ENCODE measurements at regions of chr2 and their contacts with region 1.

Region 1: GRCh38 chr2:64523666-64524603 is at the start of gene AFTPH:
- DNase-seq: peak; percentile 100
- ATAC-seq: peak; percentile 93
- H3K4me3 Mint-ChIP-seq: peak within 1 kb of the TSS; percentile 95
- H3K27ac Mint-ChIP-seq: peak within 1 kb of the TSS; percentile 100
- H3K4me1 Mint-ChIP-seq: peaks cover 30% of the 10 kb centered on the region
- H3K27me3 Mint-ChIP-seq: no peaks in the 10 kb centered on the region
- total RNA-seq, gene AFTPH: 32.3 to 35.2 TPM

Region 2: DNA sequence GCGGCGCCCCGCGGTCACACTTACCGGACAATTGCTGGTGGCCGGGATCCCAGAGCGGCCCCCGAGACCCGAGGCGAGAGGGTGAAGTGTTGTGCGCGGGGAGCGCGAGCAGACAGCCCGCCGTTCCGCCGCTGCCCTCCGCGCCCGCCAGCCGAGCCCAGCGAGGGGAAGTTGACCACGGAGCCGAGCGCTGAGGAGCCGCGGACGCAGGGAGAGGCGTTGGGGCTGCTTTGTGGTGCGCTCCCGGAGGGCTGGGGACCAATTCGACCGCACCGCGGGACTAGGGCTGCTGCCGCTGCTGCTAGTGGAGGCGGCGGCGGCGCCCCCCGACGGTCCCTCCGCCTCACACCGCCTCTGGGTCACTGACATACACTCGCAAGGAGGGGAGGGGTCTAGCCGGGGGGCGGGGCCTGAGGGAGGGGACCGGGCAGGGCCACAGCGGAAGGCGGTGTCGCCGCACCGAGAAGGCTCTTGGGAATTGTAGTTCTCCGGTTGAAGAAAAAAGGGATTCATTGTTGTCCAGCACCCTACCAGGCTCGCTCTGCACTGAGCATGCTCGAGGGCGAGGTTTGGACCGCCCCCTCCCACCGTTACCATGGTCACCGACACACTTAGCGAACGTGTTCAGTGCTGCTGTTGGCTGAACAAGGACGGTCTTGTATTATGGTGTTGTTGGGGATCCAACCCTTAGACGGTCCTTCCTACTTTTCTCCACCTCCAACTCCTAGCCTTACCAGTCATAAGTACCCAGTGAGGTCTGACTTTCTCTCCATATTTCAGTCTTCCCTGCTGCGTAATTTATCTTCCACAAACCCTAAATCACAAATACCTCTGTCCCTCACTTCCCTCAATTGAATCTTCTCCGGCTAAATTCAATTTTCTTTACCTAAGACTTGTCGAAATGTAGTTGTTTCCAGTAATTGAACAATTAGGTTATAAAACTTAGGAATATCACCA is 379.6 kb before region 1 on chr2 and contains the start of gene PELI1:
- CTCF ChIA-PET with region 1: interaction called, 3 read pairs
- POLR2A ChIA-PET with region 1: no interaction called
- intact Hi-C with region 1: loop called in 1 of 2 experiments (anchors 1 kb)
- DNase-seq: peak; percentile 97
- ATAC-seq: peak; percentile 89
- H3K4me3 Mint-ChIP-seq: peak within 1 kb of the TSS; percentile 84
- H3K27ac Mint-ChIP-seq: peak within 1 kb of the TSS; percentile 97
- H3K4me1 Mint-ChIP-seq: peaks cover 30% of the 10 kb centered on the region
- H3K27me3 Mint-ChIP-seq: no peaks in the 10 kb centered on the region
- total RNA-seq, gene PELI1: 21.3 to 29.7 TPM

Region 3: GRCh38 chr2:64348386-64349130 is 175.4 kb before region 1 on chr2:
- CTCF ChIA-PET with region 1: no interaction called
- POLR2A ChIA-PET with region 1: no interaction called
- intact Hi-C with region 1: no loop called
- DNase-seq: no peak
- ATAC-seq: no peak
- H3K4me3 Mint-ChIP-seq: no peak overlapping the region
- H3K27ac Mint-ChIP-seq: no peak overlapping the region
- H3K4me1 Mint-ChIP-seq: no peaks in the 10 kb centered on the region
- H3K27me3 Mint-ChIP-seq: peaks cover 2% of the 10 kb centered on the region

Region 4: DNA sequence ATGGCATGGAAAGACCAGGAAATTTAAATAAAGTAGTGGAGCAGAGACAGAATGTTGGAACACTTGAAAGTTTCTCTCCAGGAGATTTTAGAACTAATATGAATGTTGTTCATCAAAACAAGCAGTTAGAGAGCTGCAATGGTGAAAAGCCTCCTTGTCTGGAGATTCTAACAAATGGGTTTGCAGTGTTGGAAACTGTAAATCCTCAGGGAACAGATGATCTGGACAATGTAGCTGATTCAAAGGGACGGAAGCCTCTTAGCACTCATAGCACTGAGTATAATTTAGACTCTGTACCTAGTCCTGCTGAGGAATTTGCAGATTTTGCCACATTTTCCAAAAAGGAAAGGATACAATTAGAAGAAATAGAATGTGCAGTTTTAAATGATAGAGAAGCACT is 27.9 kb after region 1 on chr2:
- CTCF ChIA-PET with region 1: interaction called, 74 read pairs
- POLR2A ChIA-PET with region 1: no interaction called
- intact Hi-C with region 1: loop called in 1 of 2 experiments (anchors 1 kb)
- DNase-seq: no peak
- ATAC-seq: no peak
- H3K4me3 Mint-ChIP-seq: no peak overlapping the region
- H3K27ac Mint-ChIP-seq: no peak overlapping the region
- H3K4me1 Mint-ChIP-seq: peaks cover 26% of the 10 kb centered on the region
- H3K27me3 Mint-ChIP-seq: no peaks in the 10 kb centered on the region

Region 5: GRCh38 chr2:64653349-64654062 is 129.6 kb after region 1 on chr2 and contains the start of gene SERTAD2:
- CTCF ChIA-PET with region 1: interaction called, 9 read pairs
- POLR2A ChIA-PET with region 1: interaction called, 8 read pairs
- intact Hi-C with region 1: loop called (anchors 1 to 2 kb)
- DNase-seq: peak; percentile 90
- ATAC-seq: peak; percentile 80
- H3K4me3 Mint-ChIP-seq: peak within 1 kb of the TSS; percentile 85
- H3K27ac Mint-ChIP-seq: peak within 1 kb of the TSS; percentile 94
- H3K4me1 Mint-ChIP-seq: peaks cover 76% of the 10 kb centered on the region
- H3K27me3 Mint-ChIP-seq: no peaks in the 10 kb centered on the region
- total RNA-seq, gene SERTAD2: 14.5 to 14.9 TPM

Region 6: GRCh38 chr2:64831134-64831976 is 307.4 kb after region 1 on chr2:
- CTCF ChIA-PET with region 1: interaction called, 4 read pairs
- POLR2A ChIA-PET with region 1: interaction called, 4 read pairs
- intact Hi-C with region 1: loop called in 1 of 2 experiments (anchors 1 kb)
- DNase-seq: peak; percentile 92
- ATAC-seq: peak; percentile 96
- H3K4me3 Mint-ChIP-seq: peak overlapping the region; percentile 34
- H3K27ac Mint-ChIP-seq: peak overlapping the region; percentile 86
- H3K4me1 Mint-ChIP-seq: peaks cover 16% of the 10 kb centered on the region
- H3K27me3 Mint-ChIP-seq: no peaks in the 10 kb centered on the region

Region 7: DNA sequence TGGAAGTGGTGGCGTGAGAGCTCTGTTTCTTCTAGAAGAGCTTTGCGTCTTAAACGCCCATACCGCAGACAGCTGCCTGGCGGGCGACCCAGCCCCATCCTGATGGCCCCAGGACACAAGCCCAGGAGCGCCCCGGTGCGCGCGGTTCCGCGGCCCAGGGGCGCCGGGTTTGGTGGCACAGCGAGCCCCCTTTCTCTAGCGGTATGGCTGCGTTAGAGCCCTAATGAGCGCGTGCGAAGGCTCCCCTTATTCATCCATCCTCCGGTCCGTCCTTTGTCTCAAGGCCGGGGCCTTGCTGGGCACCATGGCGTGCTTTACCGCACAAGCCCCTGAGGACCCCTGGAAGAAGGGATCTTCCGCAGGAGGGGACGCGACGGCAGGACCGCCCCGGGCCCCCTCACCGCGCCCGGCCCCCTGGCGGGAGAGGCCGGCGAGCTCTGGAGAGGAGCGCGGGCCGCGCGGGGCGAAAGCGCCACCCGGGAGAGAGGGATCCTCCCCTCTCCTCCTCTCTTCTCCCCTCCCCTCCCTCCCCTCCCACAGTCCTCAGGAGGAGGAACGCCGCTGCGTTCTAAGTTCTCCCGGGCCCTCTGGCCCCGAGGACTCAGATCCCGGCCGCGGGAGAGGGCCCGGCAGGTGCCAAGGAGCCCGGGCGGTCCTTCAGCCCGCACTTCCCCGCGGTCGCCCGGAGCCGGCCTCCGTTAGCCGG is 464.6 kb after region 1 on chr2:
- CTCF ChIA-PET with region 1: no interaction called
- POLR2A ChIA-PET with region 1: no interaction called
- intact Hi-C with region 1: loop called in 1 of 2 experiments (anchors 1 kb)
- DNase-seq: peak; percentile 74
- ATAC-seq: peak; percentile 37
- H3K4me3 Mint-ChIP-seq: peak overlapping the region; percentile 68
- H3K27ac Mint-ChIP-seq: peak overlapping the region; percentile 55
- H3K4me1 Mint-ChIP-seq: peaks cover 46% of the 10 kb centered on the region
- H3K27me3 Mint-ChIP-seq: peaks cover 4% of the 10 kb centered on the region

Region 8: GRCh38 chr2:65432227-65433190 is 908.6 kb after region 1 on chr2 and contains the start of gene SPRED2:
- CTCF ChIA-PET with region 1: no interaction called
- POLR2A ChIA-PET with region 1: no interaction called
- intact Hi-C with region 1: loop called in 1 of 2 experiments (anchors 5 kb)
- DNase-seq: peak; percentile 87
- ATAC-seq: peak; percentile 50
- H3K4me3 Mint-ChIP-seq: peak within 1 kb of the TSS; percentile 85
- H3K27ac Mint-ChIP-seq: peak within 1 kb of the TSS; percentile 73
- H3K4me1 Mint-ChIP-seq: peaks cover 16% of the 10 kb centered on the region
- H3K27me3 Mint-ChIP-seq: peaks cover 23% of the 10 kb centered on the region
- total RNA-seq, gene SPRED2: 6.7 to 7.9 TPM

Measured in activated CD4-positive, alpha-beta T cell treated with anti-CD3 and anti-CD28 coated beads for 36 hours (primary cell).